ENCODE measurements at regions of chr12 and their contacts with region 1.

Region 1: DNA sequence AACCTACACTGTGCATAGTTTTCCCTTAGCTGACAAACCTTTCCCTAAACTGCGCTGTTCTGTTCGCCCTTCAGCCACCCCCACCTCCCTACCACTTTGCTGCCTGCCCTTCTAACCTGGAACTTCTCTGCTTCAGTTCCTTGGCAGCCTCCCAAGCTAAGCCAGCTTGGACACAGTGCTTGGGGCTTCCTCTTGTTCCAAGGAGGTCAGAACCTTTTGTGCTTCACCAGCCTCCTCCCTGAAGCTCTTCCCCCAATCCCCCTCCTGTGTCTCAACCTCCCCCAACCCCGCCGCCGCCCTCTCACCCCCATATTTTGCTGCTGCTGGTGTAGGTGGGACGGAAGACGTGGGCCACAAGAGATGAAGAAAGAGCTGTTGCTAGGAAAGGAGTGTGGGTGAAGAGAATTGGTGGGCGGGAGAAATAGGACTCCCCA is 8.1 kb upstream of the RIC8B start:
- DNase-seq: no peak
- H3K4me3 ChIP-seq: no peak overlapping the region
- H3K27ac ChIP-seq: peak overlapping the region in 1 of 2 donors; percentile 40
- H3K4me1 ChIP-seq: peaks cover 0 to 35% of the 10 kb centered on the region in 2 donors
- H3K27me3 ChIP-seq: no peaks in the 10 kb centered on the region
- CTCF ChIP-seq: no peak

Region 2: GRCh38 chr12:106841510-106842302 is 75.3 kb after region 1 on chr12:
- intact Hi-C with region 1: loop called (anchors 5 kb)
- DNase-seq: no peak
- H3K4me3 ChIP-seq: no peak overlapping the region
- H3K27ac ChIP-seq: peak overlapping the region in 1 of 2 donors; percentile 50
- H3K4me1 ChIP-seq: peaks cover 0 to 3% of the 10 kb centered on the region in 2 donors
- H3K27me3 ChIP-seq: no peaks in the 10 kb centered on the region
- CTCF ChIP-seq: peak; percentile 25 to 60 (median 51)